ENCODE measurements at regions of chr1 and their contacts with region 1.

Region 1: DNA sequence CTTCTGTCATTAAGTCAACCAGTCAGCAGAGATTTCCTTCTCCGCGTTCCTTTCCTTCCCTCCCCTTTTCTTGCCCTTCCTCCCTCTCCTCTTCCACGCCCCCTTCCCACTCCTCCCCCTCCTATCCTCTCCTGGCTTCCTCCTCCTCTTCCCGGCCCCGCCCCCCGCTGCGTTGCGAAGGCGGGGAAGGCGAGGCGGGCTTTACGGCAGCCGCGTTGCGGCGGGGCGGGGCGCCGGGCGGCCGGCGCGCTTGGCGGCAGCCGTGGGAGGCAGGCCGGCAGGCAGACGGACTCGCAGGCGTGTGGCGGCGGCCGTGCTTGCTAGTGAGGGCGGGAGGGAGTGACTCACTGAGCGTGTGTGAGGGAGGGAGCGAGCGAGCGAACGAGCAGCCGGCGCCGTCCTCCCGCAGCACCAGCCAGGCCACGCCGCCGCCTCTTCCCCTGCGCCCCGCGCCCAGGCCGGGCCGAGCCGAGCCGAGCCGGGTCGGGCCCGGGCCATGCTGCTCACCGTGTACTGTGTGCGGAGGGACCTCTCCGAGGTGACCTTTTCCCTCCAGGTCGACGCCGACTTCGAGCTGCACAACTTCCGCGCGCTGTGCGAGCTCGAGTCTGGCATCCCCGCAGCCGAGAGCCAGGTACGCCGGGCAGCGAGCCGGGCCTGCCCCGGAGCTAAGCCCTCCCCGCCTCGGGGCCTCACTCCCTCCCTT is at the start of gene DDI2:
- DNase-seq: peak; percentile 98
- H3K4me3 ChIP-seq: peak within 1 kb of the TSS; percentile 54 to 87 (median 75)
- H3K27ac ChIP-seq: peak within 1 kb of the TSS; percentile 56
- H3K4me1 ChIP-seq: peaks cover 27% of the 10 kb centered on the region
- H3K27me3 ChIP-seq: no peaks in the 10 kb centered on the region
- CTCF ChIP-seq: no peak
- POLR2A ChIP-seq: peak; percentile 64
- total RNA-seq, gene DDI2: 35.2 and 35.9 TPM in 2 replicates

Region 2: DNA sequence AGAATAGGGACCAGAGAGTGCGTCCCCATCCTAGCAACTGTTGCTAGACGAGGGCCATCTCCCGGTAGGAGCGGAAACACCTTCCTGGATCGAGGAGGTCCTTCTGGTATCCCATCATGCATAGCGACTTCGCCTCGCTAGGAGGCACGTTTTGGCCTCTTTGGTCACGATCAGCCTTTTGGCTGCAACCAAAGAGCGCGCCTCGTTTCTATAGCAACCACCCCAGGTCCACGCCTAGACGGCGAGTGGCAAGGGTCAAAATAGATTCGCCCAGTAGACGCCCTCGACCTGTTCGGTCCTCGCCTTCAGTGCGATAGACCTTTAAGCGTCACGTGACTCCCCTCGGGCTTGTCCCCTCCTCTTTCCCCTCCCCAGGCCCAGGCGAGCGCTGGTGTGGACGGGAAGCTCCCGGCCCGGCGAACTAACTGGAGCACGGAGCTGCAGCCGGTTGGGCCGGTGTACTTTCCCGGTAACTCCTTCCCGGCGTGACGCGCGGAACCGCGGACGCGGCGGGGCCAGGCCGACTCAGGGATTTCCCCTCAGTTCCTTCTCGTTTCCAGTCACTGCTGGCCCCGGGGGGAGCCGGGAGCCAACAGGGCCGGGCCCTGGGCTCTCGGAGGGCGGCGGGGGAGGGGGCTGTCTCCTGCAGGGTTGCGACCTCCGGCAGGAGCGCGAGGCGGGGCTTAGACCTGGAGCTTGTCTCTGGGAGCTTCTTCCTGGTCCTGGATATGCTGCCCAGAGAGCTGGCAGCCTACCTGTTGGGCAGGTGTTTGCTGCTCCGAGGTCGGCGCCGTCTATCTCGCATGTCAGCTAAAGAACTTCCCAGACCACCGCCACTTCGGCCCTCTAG is 90.6 kb before region 1 on chr1 and contains the start of gene DNAJC16:
- CTCF ChIA-PET with region 1: no interaction called
- POLR2A ChIA-PET with region 1: no interaction called
- dilution Hi-C with region 1: no loop called
- intact Hi-C with region 1: loop called (anchors 1 kb)
- DNase-seq: peak; percentile 100
- H3K4me3 ChIP-seq: peak within 1 kb of the TSS; percentile 52 to 87 (median 74)
- H3K27ac ChIP-seq: peak within 1 kb of the TSS; percentile 44
- H3K4me1 ChIP-seq: peaks cover 24% of the 10 kb centered on the region
- H3K27me3 ChIP-seq: no peaks in the 10 kb centered on the region
- CTCF ChIP-seq: peak in 1 of 2 donors; percentile 4
- POLR2A ChIP-seq: peak; percentile 90
- total RNA-seq, gene DNAJC16: 21.4 and 23.3 TPM in 2 replicates

Region 3: GRCh38 chr1:15573477-15573876 is 43.9 kb before region 1 on chr1:
- CTCF ChIA-PET with region 1: no interaction called
- POLR2A ChIA-PET with region 1: no interaction called
- dilution Hi-C with region 1: no loop called
- intact Hi-C with region 1: no loop called
- DNase-seq: no peak
- H3K4me3 ChIP-seq: no peak overlapping the region
- H3K27ac ChIP-seq: no peak overlapping the region
- H3K4me1 ChIP-seq: peaks cover 2% of the 10 kb centered on the region
- H3K27me3 ChIP-seq: no peaks in the 10 kb centered on the region
- CTCF ChIP-seq: no peak
- POLR2A ChIP-seq: no peak

Region 4: DNA sequence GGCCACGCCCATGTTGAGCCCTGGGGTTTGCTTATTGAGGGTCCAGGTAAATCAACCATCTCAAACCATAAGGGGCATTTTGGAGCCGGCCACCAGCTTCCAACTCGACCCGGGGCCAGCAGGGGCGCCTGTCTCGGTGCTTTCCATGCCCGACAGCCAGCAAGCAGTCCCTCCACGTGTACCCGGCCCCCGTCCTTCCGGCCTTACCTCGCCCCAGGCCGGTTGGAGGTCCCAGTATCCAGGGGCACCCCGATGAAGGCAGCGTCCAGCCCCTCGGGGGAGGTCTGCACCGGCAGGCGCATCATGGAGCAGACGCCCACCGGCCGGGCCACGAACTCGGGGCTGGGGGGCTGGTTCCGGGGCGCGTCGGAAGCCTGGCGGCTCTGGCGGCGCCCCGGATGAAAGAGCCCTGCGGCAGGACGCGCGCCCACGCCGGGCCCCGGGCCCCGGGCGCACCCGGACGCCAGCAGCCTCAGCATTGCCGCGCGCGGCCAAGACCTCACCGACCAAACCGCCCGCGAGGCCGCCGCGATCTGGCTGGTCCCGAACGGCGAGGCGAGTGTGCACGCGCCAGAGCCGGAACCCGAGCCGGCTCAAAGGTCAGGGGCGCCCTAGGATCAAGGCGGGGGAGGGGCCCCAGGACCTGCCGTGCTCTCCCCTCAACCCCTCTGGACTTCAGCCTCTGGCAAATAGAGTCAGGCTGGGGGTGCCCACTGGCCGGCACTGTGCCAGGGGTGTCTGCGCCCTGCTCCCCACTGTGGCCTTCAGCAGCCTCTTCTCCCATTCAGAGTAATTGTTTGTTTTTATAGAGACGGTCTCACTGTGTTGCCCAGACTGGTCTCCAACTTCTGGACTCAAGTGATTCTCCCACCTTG is 32.6 kb before region 1 on chr1 and contains the start of gene AGMAT:
- CTCF ChIA-PET with region 1: no interaction called
- POLR2A ChIA-PET with region 1: interaction called, 3 read pairs
- dilution Hi-C with region 1: no loop called
- intact Hi-C with region 1: loop called (anchors 2 kb)
- DNase-seq: peak; percentile 16
- H3K4me3 ChIP-seq: peak within 1 kb of the TSS; percentile 8 to 34 (median 10)
- H3K27ac ChIP-seq: no peak within 1 kb of the TSS
- H3K4me1 ChIP-seq: peaks cover 3% of the 10 kb centered on the region
- H3K27me3 ChIP-seq: no peaks in the 10 kb centered on the region
- CTCF ChIP-seq: peak; percentile 25 to 51
- POLR2A ChIP-seq: no peak
- total RNA-seq, gene AGMAT: 1.1 and 1.9 TPM in 2 replicates

Region 5: GRCh38 chr1:15603050-15603965 is 14.0 kb before region 1 on chr1:
- CTCF ChIA-PET with region 1: interaction called, 4 read pairs
- POLR2A ChIA-PET with region 1: no interaction called
- dilution Hi-C with region 1: no loop called
- intact Hi-C with region 1: loop called (anchors 1 kb)
- DNase-seq: peak; percentile 95
- H3K4me3 ChIP-seq: peak overlapping the region; percentile 34 to 54 (median 54)
- H3K27ac ChIP-seq: no peak overlapping the region
- H3K4me1 ChIP-seq: peaks cover 8% of the 10 kb centered on the region
- H3K27me3 ChIP-seq: peaks cover 2% of the 10 kb centered on the region in 2 experiments
- CTCF ChIP-seq: no peak
- POLR2A ChIP-seq: peak; percentile 83

Region 6: GRCh38 chr1:15684468-15685291 is 67.4 kb after region 1 on chr1:
- CTCF ChIA-PET with region 1: no interaction called
- POLR2A ChIA-PET with region 1: no interaction called
- dilution Hi-C with region 1: no loop called
- intact Hi-C with region 1: loop called (anchors 1 kb)
- DNase-seq: peak; percentile 47
- H3K4me3 ChIP-seq: peak overlapping the region; percentile 61 to 87 (median 73)
- H3K27ac ChIP-seq: peak overlapping the region; percentile 70
- H3K4me1 ChIP-seq: peaks cover 7% of the 10 kb centered on the region
- H3K27me3 ChIP-seq: no peaks in the 10 kb centered on the region
- CTCF ChIP-seq: peak in 1 of 2 donors; percentile 8
- POLR2A ChIP-seq: no peak